Activated CD8-positive, alpha-beta T cell treated with anti-CD3 and anti-CD28 coated beads for 36 hours (primary cell): ENCODE measurements at regions of chr2 and their contacts with region 1.

Region 1: DNA sequence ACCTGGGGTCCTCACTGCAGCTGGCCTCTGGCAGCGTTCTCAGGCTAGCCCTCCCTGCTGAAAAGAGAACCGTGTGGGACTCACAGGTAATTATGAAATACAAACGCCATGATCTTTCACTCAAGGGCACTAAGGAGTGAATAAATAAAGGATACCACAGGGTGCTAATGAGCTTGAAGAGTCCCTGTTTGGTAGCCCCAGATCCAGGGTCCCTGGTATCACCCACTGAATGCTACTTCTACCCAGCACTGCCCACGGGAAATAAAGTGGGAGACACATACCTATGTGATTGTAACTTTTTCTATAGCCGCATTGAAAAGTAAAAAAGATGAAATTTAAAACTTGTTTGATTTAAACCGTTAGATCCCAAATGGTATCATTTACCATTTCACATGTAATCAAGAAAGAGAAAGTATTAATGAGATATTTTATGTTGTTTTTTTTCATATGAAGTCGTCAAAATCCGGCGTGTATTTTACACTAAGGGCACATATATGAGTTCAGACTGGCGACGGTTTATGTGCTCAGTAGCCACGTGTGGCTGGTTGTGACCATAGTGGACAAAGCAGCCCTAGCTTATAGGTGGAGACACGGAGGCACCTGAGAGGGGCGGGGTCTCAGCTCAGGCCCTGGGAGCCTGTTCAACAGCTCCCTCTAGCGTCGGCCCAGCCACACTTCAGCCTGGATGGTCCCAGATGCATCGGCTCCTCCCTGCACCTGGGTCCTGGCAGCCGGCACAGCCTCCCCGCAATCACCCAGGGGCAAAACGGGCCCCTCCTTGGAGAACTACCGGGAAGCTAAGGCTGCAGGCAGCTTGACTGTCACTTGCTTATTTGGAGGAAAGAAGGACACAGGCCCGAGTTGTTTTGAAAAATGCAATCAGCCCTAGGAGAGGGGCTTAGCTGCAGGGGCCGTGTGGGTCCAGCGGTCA is 39.2 kb downstream of the ODC1 start:
- DNase-seq: peak; percentile 89
- ATAC-seq: peak; percentile 69
- H3K4me3 Mint-ChIP-seq: peak overlapping the region; percentile 57
- H3K27ac Mint-ChIP-seq: peak overlapping the region; percentile 94
- H3K4me1 Mint-ChIP-seq: peaks cover 60% of the 10 kb centered on the region
- H3K27me3 Mint-ChIP-seq: no peaks in the 10 kb centered on the region
- CTCF ChIP-seq: peak; percentile 97

Region 2: GRCh38 chr2:10072656-10073480 is 336.0 kb before region 1 on chr2:
- CTCF ChIA-PET with region 1: interaction called, 27 read pairs
- POLR2A ChIA-PET with region 1: no interaction called
- intact Hi-C with region 1: no loop called
- DNase-seq: peak; percentile 86
- ATAC-seq: peak; percentile 97
- H3K4me3 Mint-ChIP-seq: no peak overlapping the region
- H3K27ac Mint-ChIP-seq: no peak overlapping the region
- H3K4me1 Mint-ChIP-seq: peaks cover 8% of the 10 kb centered on the region
- H3K27me3 Mint-ChIP-seq: peaks cover 39% of the 10 kb centered on the region
- CTCF ChIP-seq: peak; percentile 86

Region 3: GRCh38 chr2:10122386-10123280 is 286.3 kb before region 1 on chr2 and contains the start of gene RRM2:
- CTCF ChIA-PET with region 1: interaction called, 49 read pairs
- POLR2A ChIA-PET with region 1: interaction called, 16 read pairs
- intact Hi-C with region 1: no loop called
- DNase-seq: peak; percentile 98
- ATAC-seq: peak; percentile 80
- H3K4me3 Mint-ChIP-seq: peak within 1 kb of the TSS; percentile 94
- H3K27ac Mint-ChIP-seq: peak within 1 kb of the TSS; percentile 98
- H3K4me1 Mint-ChIP-seq: peaks cover 37% of the 10 kb centered on the region
- H3K27me3 Mint-ChIP-seq: peaks cover 2% of the 10 kb centered on the region
- CTCF ChIP-seq: no peak
- total RNA-seq, gene RRM2: 368 to 396 TPM

Region 4: DNA sequence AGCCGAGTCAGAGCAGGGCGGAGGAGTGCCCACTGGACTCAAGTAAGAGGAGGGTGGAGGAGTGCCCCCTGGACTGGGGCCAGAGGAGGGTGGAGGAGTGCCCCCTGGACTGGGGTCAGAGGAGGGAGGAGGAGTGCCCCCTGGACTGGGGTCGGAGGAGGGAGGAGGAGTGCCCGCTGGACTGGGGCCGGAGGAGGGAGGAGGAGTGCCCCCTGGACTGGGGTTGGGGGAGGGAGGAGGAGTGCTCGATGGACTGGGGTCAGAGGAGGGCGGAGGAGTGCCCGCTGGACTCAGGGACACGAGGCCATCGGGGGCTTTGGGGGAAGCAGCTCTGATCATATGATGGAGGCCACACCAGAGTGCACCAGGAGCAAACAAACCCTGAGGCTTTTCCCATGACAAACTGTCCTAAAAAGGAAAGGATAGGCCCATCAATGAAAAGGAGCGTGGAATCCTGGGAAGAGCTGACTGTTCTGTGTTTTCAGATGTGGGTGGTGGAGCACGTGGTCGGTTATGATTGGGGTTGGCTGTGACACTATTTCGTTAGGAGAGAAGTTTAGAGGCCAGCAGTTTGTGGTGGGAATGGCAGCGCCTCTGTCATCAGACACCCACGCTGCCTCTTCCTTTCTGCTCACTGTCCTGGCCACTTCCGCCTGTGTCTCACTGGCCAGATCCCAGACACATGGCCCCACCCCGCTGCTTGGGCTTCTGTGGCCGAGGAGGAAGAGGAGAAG is 130.7 kb before region 1 on chr2:
- CTCF ChIA-PET with region 1: interaction called, 20 read pairs
- POLR2A ChIA-PET with region 1: no interaction called
- intact Hi-C with region 1: no loop called
- DNase-seq: peak; percentile 74
- ATAC-seq: peak; percentile 72
- H3K4me3 Mint-ChIP-seq: no peak overlapping the region
- H3K27ac Mint-ChIP-seq: peak overlapping the region; percentile 17
- H3K4me1 Mint-ChIP-seq: peaks cover 14% of the 10 kb centered on the region
- H3K27me3 Mint-ChIP-seq: no peaks in the 10 kb centered on the region
- CTCF ChIP-seq: no peak

Region 5: DNA sequence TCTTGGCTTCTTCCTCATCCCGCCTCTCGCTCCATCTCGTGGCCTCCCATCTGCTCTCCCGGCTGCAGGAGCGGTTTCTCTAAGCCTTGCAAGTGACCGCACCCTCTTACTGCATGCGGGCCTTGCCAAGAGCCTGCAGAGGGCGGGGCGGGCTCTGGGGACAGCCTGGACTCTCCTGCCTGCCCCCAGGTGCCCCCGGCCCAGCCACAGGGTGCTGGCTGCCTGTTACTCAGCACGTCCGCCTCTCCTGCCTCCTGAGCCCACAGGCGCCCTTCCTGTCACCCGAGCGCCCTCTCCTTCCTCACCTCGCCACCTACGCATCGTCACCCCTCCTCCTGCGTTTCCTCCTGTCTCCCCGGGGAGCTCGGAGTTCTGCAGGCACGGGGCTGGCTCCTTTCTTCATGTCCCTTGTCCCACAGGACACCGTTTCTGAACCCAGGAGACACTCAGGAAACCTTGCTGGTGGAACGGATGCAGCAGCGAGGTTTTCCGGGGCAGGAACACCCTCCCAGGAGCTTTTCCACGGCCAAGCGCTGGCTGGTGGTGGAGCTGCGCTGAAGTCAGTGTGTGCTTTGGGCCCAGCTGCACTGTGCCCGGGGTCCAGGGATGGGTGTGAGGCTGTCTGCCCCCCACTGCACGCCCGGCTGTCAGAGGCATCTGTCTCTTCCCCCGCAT is 77.8 kb before region 1 on chr2:
- CTCF ChIA-PET with region 1: interaction called, 49 read pairs
- POLR2A ChIA-PET with region 1: interaction called, 30 read pairs
- intact Hi-C with region 1: loop called (anchors 2 kb)
- DNase-seq: peak; percentile 92
- ATAC-seq: peak; percentile 55
- H3K4me3 Mint-ChIP-seq: peak overlapping the region; percentile 94
- H3K27ac Mint-ChIP-seq: peak overlapping the region; percentile 91
- H3K4me1 Mint-ChIP-seq: peaks cover 83% of the 10 kb centered on the region
- H3K27me3 Mint-ChIP-seq: no peaks in the 10 kb centered on the region
- CTCF ChIP-seq: no peak

Region 6: DNA sequence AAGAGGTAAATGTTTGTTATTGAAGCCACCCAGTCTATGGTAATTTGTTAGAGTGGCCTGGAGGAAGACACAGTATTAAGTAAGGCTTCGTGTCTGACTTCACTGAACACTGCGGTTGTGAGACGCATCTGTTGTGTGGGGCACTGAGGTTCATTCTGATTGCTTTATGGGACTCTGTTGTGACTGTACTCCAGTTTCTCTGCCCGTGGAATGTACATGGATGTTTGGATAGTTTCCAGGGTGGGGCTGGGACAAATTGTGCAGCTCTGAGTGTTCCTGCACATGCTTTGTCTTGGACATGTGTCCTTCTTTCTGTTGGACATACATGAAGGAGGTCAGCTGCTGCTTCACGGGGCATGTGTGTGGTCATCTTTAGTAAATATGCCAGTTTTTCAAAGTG is 19.3 kb before region 1 on chr2:
- CTCF ChIA-PET with region 1: interaction called, 75 read pairs
- POLR2A ChIA-PET with region 1: interaction called, 3 read pairs
- intact Hi-C with region 1: no loop called
- DNase-seq: no peak
- ATAC-seq: no peak
- H3K4me3 Mint-ChIP-seq: no peak overlapping the region
- H3K27ac Mint-ChIP-seq: peak overlapping the region; percentile 39
- H3K4me1 Mint-ChIP-seq: peaks cover 76% of the 10 kb centered on the region
- H3K27me3 Mint-ChIP-seq: no peaks in the 10 kb centered on the region
- CTCF ChIP-seq: no peak

Region 7: DNA sequence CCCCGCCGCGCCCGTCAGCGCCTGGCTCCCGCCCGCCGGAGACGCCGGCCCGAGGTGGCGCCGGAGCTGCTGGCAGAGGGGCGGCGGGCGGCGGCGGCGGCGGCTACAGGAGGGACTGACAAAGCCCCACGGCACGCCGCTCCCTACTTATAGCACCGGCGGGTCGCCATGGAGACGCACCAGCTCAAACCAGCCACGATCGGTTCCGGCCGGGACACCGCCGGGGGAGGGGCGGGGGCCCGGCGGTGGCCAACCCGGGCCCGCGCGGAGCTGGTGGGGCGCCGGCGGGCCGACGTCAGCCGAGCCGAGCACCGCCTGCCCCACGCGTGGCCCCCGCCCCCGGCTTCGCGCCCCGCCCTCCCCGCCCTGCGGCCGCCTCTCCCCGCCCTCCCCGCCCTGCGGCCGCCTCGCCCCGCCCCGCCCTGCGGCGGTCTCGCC is 39.3 kb after region 1 on chr2 and contains the start of gene ODC1:
- CTCF ChIA-PET with region 1: interaction called, 13 read pairs
- POLR2A ChIA-PET with region 1: interaction called, 4 read pairs
- intact Hi-C with region 1: no loop called
- DNase-seq: peak; percentile 95
- ATAC-seq: peak; percentile 76
- H3K4me3 Mint-ChIP-seq: peak within 1 kb of the TSS; percentile 81
- H3K27ac Mint-ChIP-seq: peak within 1 kb of the TSS; percentile 94
- H3K4me1 Mint-ChIP-seq: peaks cover 47% of the 10 kb centered on the region
- H3K27me3 Mint-ChIP-seq: no peaks in the 10 kb centered on the region
- CTCF ChIP-seq: no peak
- total RNA-seq, gene ODC1: 180 to 181 TPM